Esophagus muscularis mucosa (tissue), 4 donors: ENCODE measurements at regions of chr12 and their contacts with region 1.

Region 1: GRCh38 chr12:122793685-122794106 is 19.3 kb downstream of the CCDC62 start:
- DNase-seq: no peak
- H3K4me3 ChIP-seq: no peak overlapping the region
- H3K27ac ChIP-seq: no peak overlapping the region
- H3K4me1 ChIP-seq: peaks cover 0 to 5% (median 0%) of the 10 kb centered on the region in 4 donors
- H3K27me3 ChIP-seq: no peaks in the 10 kb centered on the region
- CTCF ChIP-seq: peak; percentile 67 to 78 (median 73)
- EP300 ChIP-seq: no peak
- POLR2A ChIP-seq: no peak

Region 2: DNA sequence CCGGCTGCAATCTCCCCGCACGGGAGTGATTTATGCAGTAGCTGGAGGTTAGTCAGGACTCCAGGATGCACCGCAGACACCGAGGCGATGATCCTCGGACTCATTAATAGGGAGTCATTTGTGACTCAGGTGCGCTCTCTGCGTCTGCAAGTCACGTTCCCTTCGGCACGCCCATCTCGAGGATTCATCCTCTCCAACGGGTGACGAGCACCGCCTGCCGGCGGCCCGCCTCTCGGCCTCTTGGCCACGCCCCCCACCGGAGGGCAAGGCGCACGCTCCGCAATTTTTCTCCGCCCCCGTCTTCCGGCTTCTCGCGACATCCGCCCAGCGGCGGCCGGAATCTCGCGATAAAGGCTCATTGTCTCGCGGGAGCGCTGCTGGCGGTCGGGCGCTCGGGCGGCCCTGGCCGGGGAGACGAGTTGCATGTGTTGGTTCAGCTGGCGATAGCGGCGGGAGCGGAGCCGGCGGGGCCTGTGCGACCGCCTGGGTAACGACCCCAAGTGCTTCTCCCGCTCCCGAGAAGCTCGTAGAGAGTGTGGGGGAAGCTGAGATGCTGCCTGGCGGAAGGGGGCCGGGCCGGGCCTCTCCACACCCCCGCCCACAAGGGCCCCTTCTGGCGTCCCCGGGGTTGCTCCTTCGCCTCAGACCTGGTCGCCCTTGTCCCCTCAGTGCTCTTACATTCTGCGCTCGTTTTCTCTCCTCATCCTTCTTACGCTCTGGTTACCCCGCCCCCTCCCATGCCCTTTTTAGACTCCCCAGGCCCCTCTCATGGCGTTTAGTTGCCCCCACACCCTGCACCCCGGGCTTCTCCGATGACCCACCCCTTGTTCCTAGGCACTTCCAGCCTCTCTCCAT is 41.0 kb before region 1 on chr12 and contains the start of gene DENR:
- intact Hi-C with region 1: no loop called
- DNase-seq: peak; percentile 99
- H3K4me3 ChIP-seq: peak within 1 kb of the TSS; percentile 71 to 91 (median 89)
- H3K27ac ChIP-seq: peak within 1 kb of the TSS; percentile 78 to 86 (median 84)
- H3K4me1 ChIP-seq: peaks cover 15 to 33% (median 28%) of the 10 kb centered on the region in 4 donors
- H3K27me3 ChIP-seq: no peaks in the 10 kb centered on the region
- CTCF ChIP-seq: peak; percentile 80 to 97 (median 92)
- EP300 ChIP-seq: no peak
- POLR2A ChIP-seq: peak; percentile 43
- total RNA-seq, gene DENR: 20.7 to 32.1 (median 23.7) TPM

Region 3: GRCh38 chr12:122851820-122852219 is 58.1 kb after region 1 on chr12:
- intact Hi-C with region 1: loop called (anchors 10 kb)
- DNase-seq: no peak
- H3K4me3 ChIP-seq: no peak overlapping the region
- H3K27ac ChIP-seq: peak overlapping the region; percentile 52 to 76 (median 54)
- H3K4me1 ChIP-seq: peaks cover 25 to 32% (median 31%) of the 10 kb centered on the region in 4 donors
- H3K27me3 ChIP-seq: no peaks in the 10 kb centered on the region
- CTCF ChIP-seq: no peak
- EP300 ChIP-seq: no peak
- POLR2A ChIP-seq: no peak

Region 4: GRCh38 chr12:122895705-122896636 is 102.3 kb after region 1 on chr12 and contains the start of gene VPS37B:
- intact Hi-C with region 1: no loop called
- DNase-seq: no peak
- H3K4me3 ChIP-seq: peak within 1 kb of the TSS; percentile 76 to 96 (median 91)
- H3K27ac ChIP-seq: peak within 1 kb of the TSS; percentile 85 to 96 (median 93)
- H3K4me1 ChIP-seq: peaks cover 37 to 47% (median 44%) of the 10 kb centered on the region in 4 donors
- H3K27me3 ChIP-seq: peaks cover 0 to 4% (median 0%) of the 10 kb centered on the region in 4 donors
- CTCF ChIP-seq: no peak
- EP300 ChIP-seq: no peak
- POLR2A ChIP-seq: peak; percentile 94
- total RNA-seq, gene VPS37B: 21.2 to 52.4 (median 38.1) TPM

Region 5: DNA sequence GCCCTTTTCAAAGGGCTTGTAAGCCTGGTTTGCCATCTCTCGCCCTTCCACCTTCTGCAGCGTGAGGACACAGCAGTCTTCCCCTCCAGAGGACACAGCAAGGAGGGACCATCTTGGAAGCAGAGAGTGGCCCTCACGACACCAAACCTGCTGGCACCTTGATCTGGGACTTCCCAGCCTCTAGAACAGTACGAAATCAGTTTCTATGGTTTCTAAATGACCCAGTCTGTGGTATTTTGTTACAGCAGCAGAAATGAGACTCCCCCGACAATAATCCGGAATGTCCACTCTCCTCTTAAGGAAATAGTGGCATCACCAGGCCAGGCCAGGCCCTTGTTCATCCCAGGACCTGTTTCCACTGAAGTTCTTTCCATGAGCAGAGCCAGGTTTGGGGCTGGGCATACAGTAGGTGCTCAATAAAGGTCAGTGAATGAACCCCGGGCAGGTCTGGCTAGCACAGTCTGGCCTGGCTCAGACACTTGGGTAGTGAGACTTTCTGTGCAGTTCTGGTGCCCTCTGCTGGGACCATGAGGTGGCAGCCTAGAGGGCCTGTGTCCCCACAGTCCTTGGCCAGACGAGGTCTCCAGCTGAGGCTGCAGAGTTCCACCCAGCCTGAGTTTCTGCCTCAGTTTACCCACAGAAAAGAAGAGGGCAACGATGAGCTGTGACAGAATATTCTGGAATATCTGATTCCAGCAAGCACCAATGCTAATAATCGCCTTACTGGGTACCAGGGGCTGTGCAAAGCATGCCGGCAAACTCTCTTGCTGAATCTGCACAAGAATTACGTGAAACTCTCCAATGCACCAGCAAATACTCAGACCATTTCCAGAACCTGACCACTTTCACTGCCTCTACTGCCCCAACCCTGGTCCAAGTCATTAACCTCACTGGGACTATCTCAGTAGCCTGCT is 158.5 kb after region 1 on chr12:
- intact Hi-C with region 1: loop called (anchors 5 kb)
- DNase-seq: peak; percentile 93
- H3K4me3 ChIP-seq: no peak overlapping the region
- H3K27ac ChIP-seq: no peak overlapping the region
- H3K4me1 ChIP-seq: peaks cover 6 to 20% (median 18%) of the 10 kb centered on the region in 4 donors
- H3K27me3 ChIP-seq: no peaks in the 10 kb centered on the region
- CTCF ChIP-seq: peak; percentile 87 to 93 (median 90)
- EP300 ChIP-seq: no peak
- POLR2A ChIP-seq: no peak